Sigmoid colon (tissue), 7 donors: ENCODE measurements at regions of chr11 and their contacts with region 1.

Region 1: DNA sequence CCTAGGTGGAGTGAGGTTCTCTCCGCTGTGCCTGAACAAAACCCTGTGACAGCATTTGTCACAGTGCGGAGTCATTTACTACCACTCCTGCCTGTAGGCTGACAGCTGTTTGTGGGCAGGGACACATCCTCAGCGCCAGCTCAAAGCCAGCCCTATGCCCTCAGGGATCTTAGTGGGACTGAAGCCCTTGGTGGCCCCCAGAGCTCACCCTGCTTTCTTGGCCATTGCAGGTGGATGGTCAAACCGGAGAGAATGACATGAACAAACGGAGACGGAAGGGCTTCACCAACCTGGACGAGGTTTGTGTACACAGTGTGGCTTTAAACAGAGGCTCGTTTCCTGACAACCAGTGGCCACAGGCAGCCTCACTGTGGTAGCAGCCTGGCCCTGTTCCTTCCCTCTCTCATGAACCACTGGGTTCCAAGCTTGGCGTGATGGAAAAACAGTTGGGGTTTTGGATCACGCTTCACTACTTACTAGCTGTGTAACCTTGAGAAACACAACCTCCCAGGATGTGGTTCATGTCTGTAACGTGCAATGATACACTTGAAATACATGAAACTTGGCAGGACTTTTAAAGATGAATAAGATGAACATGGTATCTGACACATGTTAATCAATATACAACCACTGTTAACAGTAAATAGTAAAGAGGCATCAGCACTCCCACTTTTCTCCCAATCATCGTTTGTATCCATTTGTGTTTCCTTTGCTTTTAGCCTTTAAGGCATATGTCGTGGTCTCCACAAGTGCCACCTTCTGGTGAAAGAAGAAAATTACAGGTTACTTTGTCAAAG is 125.8 kb downstream of the MICAL2 start:
- DNase-seq: no peak
- H3K4me3 ChIP-seq: no peak overlapping the region
- H3K27ac ChIP-seq: peak overlapping the region; percentile 77 to 89 (median 86)
- H3K4me1 ChIP-seq: peaks cover 0 to 83% (median 76%) of the 10 kb centered on the region in 4 donors
- H3K27me3 ChIP-seq: no peaks in the 10 kb centered on the region
- CTCF ChIP-seq: peak; percentile 32 to 64 (median 56)
- EP300 ChIP-seq: no peak
- POLR2A ChIP-seq: no peak

Region 2: DNA sequence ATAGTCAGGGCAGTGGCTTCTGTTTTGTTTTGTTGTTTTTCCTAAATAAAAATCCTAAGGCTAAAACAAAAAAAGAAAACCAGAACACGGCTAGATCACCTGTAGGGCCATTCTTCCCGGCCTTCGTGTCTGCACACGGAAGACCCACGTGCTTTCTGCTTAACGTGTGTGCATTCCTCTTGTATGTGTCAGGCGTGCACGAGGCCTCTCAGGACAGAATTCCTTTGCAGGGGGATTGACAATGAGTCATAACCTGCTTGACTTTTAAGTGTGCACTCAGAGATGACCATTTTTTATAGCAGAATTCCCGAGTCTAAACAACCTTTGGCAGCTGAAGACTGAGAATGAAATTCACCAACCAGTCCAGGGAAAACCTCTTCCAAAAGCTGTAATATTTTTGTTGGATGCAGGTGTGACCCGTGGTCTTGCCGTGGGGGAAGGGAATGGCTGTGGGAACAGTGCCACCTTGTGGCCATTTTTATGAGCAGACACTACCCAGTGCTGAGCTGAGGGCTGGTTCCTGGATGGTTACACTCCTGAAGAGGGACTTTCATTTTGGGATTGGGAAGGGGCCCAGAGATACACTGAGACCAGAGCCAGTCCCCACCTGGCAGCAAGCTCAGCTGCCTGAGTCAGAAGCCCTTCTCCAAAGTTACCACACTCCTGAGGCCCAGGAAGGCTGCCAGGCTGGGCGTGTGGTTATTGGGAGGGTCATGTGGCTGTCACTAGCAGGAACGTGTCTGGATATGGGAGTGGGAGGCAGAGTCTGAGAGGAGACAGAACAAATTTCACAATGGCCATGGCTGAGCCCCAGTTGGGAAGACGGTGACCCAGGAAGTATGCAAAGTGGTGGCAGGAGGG is 192.0 kb before region 1 on chr11:
- intact Hi-C with region 1: no loop called
- DNase-seq: peak; percentile 95
- H3K4me3 ChIP-seq: peak overlapping the region in 1 of 4 donors; percentile 10
- H3K27ac ChIP-seq: peak overlapping the region; percentile 46 to 82 (median 74)
- H3K4me1 ChIP-seq: peaks cover 0 to 25% (median 20%) of the 10 kb centered on the region in 4 donors
- H3K27me3 ChIP-seq: no peaks in the 10 kb centered on the region
- CTCF ChIP-seq: peak; percentile 87 to 96 (median 92)
- EP300 ChIP-seq: peak in 3 of 4 donors; percentile 22 to 98 (median 39)
- POLR2A ChIP-seq: no peak

Region 3: DNA sequence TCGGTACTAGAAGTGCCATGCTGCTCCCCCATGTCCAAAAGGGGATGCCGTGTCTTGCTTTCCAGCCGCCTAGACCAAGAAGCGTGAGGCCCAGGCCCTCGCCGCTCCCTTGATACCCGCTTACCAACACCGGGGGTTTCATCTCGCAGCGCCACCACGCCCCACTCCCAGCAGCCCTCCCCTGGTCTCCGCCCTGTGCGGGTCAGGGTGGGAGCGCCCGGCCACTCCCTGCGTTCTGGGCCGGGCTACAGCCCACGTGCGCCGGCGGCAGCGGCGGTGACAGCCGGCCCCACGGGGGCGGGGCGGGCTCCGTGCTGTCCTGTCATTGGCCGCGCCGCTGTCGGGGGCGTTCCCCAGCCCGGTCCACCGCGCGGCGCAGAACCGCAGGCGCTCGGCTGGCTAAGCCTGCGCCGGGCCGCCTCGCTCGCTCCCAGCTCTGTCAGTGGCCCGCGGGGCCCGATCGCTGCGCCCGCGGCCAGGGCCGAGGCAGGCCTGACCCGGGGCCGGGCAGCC is 125.9 kb before region 1 on chr11 and contains the start of gene MICAL2:
- intact Hi-C with region 1: loop called (anchors 5 kb)
- DNase-seq: peak; percentile 94
- H3K4me3 ChIP-seq: peak within 1 kb of the TSS; percentile 71 to 99 (median 77)
- H3K27ac ChIP-seq: peak within 1 kb of the TSS; percentile 92 to 98 (median 95)
- H3K4me1 ChIP-seq: peaks cover 0 to 45% (median 38%) of the 10 kb centered on the region in 4 donors
- H3K27me3 ChIP-seq: no peaks in the 10 kb centered on the region
- CTCF ChIP-seq: no peak
- EP300 ChIP-seq: peak in 1 of 4 donors; percentile 5
- POLR2A ChIP-seq: peak in 1 of 2 donors; percentile 29
- total RNA-seq, gene MICAL2: 115 to 145 (median 130) TPM

Region 4: DNA sequence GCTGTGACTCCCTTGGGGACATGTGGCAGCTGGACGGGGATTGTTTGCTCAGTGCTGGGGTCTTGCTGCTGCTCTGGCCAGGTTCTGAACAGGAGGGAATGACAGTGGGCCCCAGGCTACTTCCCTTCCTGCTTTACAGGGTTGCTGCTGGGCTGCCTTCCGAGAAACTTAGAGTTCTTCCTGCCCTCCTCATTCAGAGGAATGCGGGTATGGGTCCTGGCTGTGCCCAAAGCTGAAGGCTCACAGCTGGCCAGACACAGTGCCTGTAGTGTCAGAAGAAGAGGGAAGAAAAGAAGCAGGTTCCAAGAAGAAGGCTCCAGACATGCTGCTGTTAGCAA is 32.9 kb after region 1 on chr11:
- intact Hi-C with region 1: no loop called
- DNase-seq: peak; percentile 80
- H3K4me3 ChIP-seq: no peak overlapping the region
- H3K27ac ChIP-seq: peak overlapping the region; percentile 57 to 83 (median 77)
- H3K4me1 ChIP-seq: peaks cover 0 to 32% (median 25%) of the 10 kb centered on the region in 4 donors
- H3K27me3 ChIP-seq: no peaks in the 10 kb centered on the region
- CTCF ChIP-seq: no peak
- EP300 ChIP-seq: no peak
- POLR2A ChIP-seq: no peak

Region 5: GRCh38 chr11:12449961-12450715 is 214.0 kb after region 1 on chr11:
- intact Hi-C with region 1: no loop called
- DNase-seq: no peak
- H3K4me3 ChIP-seq: no peak overlapping the region
- H3K27ac ChIP-seq: peak overlapping the region in 2 of 4 donors; percentile 89 to 90
- H3K4me1 ChIP-seq: peaks cover 0 to 87% (median 73%) of the 10 kb centered on the region in 4 donors
- H3K27me3 ChIP-seq: no peaks in the 10 kb centered on the region
- CTCF ChIP-seq: no peak
- EP300 ChIP-seq: no peak
- POLR2A ChIP-seq: no peak